Caki2 (cell line): ENCODE measurements at regions of chr15 and their contacts with region 1.

Region 1: GRCh38 chr15:80436511-80437307 is 32.5 kb downstream of the ARNT2 start:
- DNase-seq: peak; percentile 75

Region 2: DNA sequence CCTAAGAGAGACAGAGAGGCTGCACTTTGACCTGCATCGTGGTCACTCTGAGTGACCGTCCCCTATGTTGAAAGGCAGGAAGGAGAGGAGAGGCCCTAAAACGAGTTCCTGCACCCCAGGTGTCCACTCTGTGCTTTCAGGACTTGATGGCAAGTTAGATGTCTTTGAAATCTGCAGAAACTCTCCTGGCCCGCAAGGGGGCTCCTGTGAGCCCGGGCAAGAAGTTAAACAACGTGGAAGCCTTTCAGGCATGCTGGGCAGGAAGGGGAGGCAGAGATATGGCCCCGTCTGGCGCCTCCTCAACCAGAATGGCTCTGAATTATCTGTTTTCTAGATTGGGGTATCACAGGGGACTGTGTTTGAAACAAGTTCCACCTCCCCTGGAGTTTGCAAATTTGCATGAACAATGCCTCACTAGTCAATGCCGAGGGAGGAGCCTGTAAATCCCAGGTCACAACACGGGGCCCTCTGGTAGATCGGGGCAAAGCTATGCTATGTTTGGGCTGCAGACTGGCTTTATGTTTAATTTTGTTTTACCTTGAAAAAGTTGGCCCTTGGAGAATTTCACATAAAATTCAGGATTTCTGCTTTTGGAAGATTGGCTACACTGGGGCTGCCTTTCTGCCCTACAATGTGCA is 194.5 kb before region 1 on chr15:
- in situ Hi-C with region 1: no loop called
- DNase-seq: no peak

Region 3: DNA sequence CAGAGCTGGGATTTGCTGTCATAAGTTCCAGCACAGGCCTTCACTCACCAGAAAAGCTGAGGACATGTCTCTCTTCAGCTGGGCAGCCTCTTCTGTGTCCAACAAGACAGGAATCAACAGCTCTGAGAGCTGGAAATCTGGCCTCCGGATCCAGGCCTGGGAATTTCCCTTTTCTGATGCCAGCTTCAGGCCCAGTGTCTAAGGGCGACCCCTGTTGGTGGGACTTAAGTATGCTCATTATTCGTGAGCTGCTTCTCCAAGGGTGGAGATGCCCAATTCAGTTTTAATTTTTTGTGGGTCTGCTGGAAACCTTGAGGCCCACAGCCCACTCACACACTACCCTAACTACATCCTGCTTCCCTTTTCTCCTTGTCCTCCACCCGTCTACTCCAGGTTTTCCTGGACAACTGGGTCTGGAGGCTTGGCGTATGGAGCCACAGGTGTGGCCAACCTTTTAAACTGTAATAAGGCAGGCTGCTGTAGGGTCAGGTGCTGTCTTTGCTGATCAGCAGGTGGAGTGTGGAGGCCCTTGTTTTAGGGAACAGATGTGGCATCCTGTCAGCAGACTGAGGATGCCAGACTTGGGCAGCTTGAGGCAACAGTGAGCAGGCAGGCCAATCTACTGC is 339.8 kb after region 1 on chr15:
- in situ Hi-C with region 1: loop called (anchors 25 kb)
- DNase-seq: peak; percentile 56